ENCODE measurements at regions of chr1 and their contacts with region 1.

Region 1: DNA sequence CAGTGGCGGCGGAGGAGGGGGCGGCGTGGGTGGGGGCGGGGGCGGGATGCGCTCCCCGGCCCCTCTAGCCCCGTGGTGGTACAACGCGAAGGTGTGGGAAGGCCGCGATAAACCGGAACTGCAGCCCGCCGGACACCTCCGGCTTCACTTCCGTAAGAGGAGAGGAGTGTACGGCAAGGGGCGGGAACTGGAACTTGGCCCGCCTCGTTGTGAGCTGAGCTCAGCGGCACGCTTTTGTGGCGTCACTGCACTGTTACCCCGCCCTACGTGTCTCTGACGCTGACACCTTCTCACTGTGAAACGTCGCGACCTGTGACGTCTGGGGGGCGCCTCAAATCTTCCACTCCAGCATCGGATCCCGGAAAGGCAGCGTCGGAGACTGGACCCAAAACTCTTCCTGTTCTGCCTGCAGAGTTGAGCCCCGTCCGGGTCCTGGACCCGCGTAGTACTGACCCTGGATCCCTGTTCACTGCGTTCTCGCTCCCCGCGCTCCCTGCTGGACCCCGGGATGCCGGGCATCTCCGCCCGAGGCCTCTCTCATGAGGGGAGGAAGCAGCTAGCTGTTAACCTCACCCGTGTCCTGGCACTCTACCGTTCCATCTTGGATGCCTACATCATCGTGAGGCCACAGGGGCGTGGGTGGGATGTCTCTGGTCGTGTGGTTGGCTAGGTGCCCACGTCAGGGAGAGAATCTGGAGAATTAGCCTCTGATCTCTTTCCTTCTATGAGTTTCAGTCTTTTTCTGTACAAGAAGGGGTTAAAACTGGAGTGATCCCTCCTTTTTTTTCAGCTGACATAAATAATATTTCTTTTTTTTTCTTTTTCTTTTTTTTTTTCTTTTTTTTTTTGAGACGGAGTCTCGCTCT is at the start of gene ISG20L2:
- DNase-seq: peak; percentile 87 to 97 (median 96)
- ATAC-seq: peak; percentile 90 to 94 (median 91)
- H3K4me3 ChIP-seq: peak within 1 kb of the TSS; percentile 61 to 86 (median 70)
- H3K27ac ChIP-seq: peak within 1 kb of the TSS; percentile 91 to 98 (median 96)
- H3K4me1 ChIP-seq: peaks cover 28 to 39% (median 34%) of the 10 kb centered on the region in 3 donors
- H3K27me3 ChIP-seq: no peaks in the 10 kb centered on the region
- CTCF ChIP-seq: no peak
- total RNA-seq, gene ISG20L2: 7.7 to 13.2 (median 9.6) TPM

Region 2: DNA sequence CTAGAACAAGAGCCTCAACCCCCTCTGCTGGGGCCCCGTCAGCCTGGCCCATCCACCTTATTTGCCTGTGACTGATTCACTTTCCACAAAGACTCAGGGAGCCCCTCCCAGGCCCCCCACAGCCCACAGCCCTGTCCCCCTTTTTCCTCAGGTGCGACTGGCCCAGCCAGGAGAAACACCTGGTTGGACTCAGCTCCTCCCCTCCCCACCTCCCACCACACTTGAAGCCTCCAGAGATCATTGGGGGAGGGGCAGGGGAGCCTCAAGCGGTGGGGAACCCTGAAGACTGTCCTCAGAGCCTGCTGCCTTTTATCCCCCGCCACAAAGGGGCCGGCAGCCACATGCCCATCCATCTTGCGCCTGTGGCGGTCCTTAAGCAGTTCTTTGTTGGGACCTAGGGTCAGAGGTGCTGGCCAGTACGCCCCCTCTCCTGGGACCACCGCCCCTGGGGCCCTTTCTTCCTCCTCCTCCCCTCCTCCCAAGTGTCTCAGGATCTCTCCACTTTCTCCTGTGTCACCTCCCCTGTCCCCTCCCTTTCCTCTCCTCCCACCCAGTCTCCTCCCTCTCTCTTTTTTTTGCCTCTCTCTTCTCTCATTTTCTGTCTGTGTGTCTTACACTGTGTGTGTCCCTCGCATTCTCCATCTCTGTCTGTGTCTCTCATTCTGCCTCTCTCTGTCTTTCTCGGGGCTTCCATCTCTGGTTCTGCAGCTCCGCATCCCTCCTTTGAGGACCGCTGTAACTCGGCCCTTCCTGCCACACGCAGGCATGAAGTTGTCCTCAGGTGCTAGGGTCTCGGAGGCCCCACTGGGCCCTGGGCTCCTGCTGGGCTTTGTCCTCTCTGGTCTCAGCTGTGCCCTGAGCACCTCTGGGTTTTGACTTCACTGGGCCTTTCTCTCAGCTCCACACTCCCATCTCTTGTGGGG is 35.6 kb before region 1 on chr1:
- intact Hi-C with region 1: loop called in 2 of 3 experiments (anchors 5 kb)
- DNase-seq: peak; percentile 24 to 81 (median 71)
- ATAC-seq: peak; percentile 80 to 85 (median 84)
- H3K4me3 ChIP-seq: no peak overlapping the region
- H3K27ac ChIP-seq: no peak overlapping the region
- H3K4me1 ChIP-seq: peaks cover 5 to 12% (median 9%) of the 10 kb centered on the region in 3 donors
- H3K27me3 ChIP-seq: no peaks in the 10 kb centered on the region
- CTCF ChIP-seq: no peak

Region 3: GRCh38 chr1:156705918-156706656 is 22.7 kb before region 1 on chr1:
- intact Hi-C with region 1: no loop called
- DNase-seq: peak; percentile 37 to 84 (median 63)
- ATAC-seq: peak; percentile 64 to 75 (median 70)
- H3K4me3 ChIP-seq: peak overlapping the region; percentile 7 to 48 (median 26)
- H3K27ac ChIP-seq: no peak overlapping the region
- H3K4me1 ChIP-seq: peaks cover 9 to 22% (median 17%) of the 10 kb centered on the region in 3 donors
- H3K27me3 ChIP-seq: peaks cover 0 to 6% (median 0%) of the 10 kb centered on the region in 4 donors
- CTCF ChIP-seq: peak; percentile 57 to 73 (median 64)

Measured in pancreas (tissue), 10 donors.